Heart left ventricle (tissue), 16 donors: ENCODE measurements at regions of chr2 and their contacts with region 1.

Region 1: GRCh38 chr2:160109936-160110673 is 47.7 kb upstream of the PLA2R1 start:
- DNase-seq: peak; percentile 55 to 71 (median 62)
- ATAC-seq: peak; percentile 73 to 94 (median 86)
- H3K4me3 ChIP-seq: no peak overlapping the region
- H3K27ac ChIP-seq: no peak overlapping the region
- H3K4me1 ChIP-seq: no peaks in the 10 kb centered on the region
- H3K27me3 ChIP-seq: no peaks in the 10 kb centered on the region
- CTCF ChIP-seq: peak; percentile 54 to 90 (median 80)
- POLR2A ChIP-seq: no peak

Region 2: GRCh38 chr2:160241251-160242137 is 131.4 kb after region 1 on chr2:
- intact Hi-C with region 1: loop called in 2 of 10 experiments (anchors 5 to 10 kb)
- DNase-seq: peak in 4 of 5 donors; percentile 30 to 66 (median 53)
- ATAC-seq: peak in 3 of 4 donors; percentile 49 to 84 (median 67)
- H3K4me3 ChIP-seq: no peak overlapping the region
- H3K27ac ChIP-seq: peak overlapping the region in 5 of 12 donors; percentile 14 to 42 (median 27)
- H3K4me1 ChIP-seq: peaks cover 0 to 28% (median 18%) of the 10 kb centered on the region in 12 donors
- H3K27me3 ChIP-seq: no peaks in the 10 kb centered on the region
- CTCF ChIP-seq: no peak
- POLR2A ChIP-seq: no peak

Region 3: DNA sequence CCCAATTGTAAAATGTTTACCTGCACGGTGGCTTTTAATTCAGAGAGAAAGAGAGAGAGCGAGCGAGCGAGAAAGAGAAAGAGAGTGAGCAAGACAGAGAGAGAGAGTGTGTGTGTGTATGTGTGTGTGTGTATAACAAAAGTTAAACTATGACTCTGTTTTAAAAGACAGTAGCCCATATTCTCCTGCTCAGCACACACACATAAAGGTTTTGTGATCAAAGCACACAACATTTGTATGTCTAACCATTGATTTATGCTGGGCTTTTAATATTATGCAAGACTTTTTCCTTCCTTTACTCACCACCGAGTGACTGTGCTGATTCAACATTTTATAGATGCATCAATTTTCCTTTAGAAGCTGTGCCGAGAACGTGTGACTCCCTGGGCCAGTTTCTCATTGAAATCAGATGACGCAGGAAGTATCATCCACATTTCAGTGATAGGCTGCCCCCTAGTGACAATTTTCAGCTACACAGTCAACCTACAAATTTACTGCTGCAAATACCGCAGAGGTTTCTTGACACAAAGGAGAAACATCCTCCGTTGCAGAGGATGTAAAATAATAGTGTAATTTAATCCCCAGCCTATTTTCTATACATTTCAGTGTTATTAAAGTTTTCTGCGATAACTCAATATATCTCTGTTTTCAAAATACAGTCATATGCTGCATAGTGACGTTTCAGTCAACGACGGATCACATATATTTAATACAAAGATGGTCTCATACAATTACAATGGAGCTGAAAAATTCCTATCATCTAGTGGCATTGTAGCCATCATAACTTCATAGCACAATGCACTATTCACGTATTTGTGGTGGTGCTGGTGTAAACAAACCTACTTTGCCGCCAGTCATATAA is 884.3 kb after region 1 on chr2:
- intact Hi-C with region 1: loop called (anchors 2 to 5 kb)
- DNase-seq: peak in 4 of 5 donors; percentile 60 to 75 (median 66)
- ATAC-seq: peak; percentile 82 to 90 (median 88)
- H3K4me3 ChIP-seq: peak overlapping the region in 3 of 12 donors; percentile 1 to 22 (median 19)
- H3K27ac ChIP-seq: peak overlapping the region in 9 of 12 donors; percentile 20 to 75 (median 57)
- H3K4me1 ChIP-seq: peaks cover 0 to 16% (median 6%) of the 10 kb centered on the region in 12 donors
- H3K27me3 ChIP-seq: no peaks in the 10 kb centered on the region
- CTCF ChIP-seq: peak; percentile 78 to 93 (median 83)
- POLR2A ChIP-seq: no peak

Region 4: GRCh38 chr2:161004379-161004778 is 894.3 kb after region 1 on chr2:
- intact Hi-C with region 1: loop called in 1 of 10 experiments (anchors 5 kb)
- DNase-seq: no peak
- ATAC-seq: no peak
- H3K4me3 ChIP-seq: no peak overlapping the region
- H3K27ac ChIP-seq: no peak overlapping the region
- H3K4me1 ChIP-seq: no peaks in the 10 kb centered on the region
- H3K27me3 ChIP-seq: no peaks in the 10 kb centered on the region
- CTCF ChIP-seq: peak in 9 of 12 donors; percentile 18 to 48 (median 26)
- POLR2A ChIP-seq: no peak

Region 5: DNA sequence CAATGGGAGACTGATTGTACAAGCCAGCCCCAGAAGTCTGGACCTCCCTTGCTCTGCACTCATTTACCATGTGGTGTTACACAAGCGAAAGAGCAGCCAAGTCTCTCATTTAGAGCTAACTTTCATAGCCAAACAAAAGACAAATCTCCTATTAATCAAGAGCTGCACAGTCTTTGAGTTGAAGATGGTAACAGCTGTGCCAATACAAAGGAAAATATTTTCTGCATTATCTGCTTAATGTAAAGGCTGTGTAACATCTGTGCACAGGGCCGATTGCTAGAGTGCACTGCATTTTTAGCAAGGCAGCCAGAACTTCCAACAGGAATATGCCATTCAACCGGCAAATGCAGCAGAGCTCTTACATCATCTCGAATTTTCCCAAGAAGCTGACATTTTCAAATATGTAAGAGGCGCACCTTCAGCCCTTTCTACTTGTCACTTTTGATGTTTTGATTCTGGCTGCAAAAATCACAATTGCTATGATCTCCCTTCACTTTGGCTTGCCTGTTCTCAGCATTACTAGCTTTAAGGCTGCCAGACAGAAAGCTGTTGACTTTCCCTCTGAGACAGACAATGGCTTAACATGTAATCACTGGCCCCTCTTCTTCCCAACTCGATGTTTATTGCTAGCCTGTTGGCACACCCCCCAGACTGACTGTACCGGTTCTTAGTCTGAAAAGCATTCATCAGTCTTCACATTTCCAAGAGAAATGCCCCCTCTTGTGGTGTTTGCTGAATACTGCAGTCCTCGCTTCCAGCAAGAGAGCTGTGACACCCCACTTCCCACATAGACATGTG is 953.3 kb after region 1 on chr2:
- intact Hi-C with region 1: loop called in 5 of 10 experiments (anchors 5 to 10 kb)
- DNase-seq: peak in 4 of 5 donors; percentile 59 to 69 (median 66)
- ATAC-seq: peak in 3 of 4 donors; percentile 80 to 84 (median 82)
- H3K4me3 ChIP-seq: peak overlapping the region in 3 of 12 donors; percentile 2 to 20 (median 2)
- H3K27ac ChIP-seq: no peak overlapping the region
- H3K4me1 ChIP-seq: peaks cover 0 to 9% (median 0%) of the 10 kb centered on the region in 12 donors
- H3K27me3 ChIP-seq: no peaks in the 10 kb centered on the region
- CTCF ChIP-seq: peak; percentile 74 to 94 (median 86)
- POLR2A ChIP-seq: no peak